ENCODE measurements at regions of chr6 and their contacts with region 1.

Region 1: GRCh38 chr6:168370310-168370991 is 50.9 kb upstream of the DACT2 start:
- DNase-seq: peak; percentile 91
- H3K4me3 ChIP-seq: no peak overlapping the region; a peak in 1 of 4 replicates
- H3K27ac ChIP-seq: no peak overlapping the region
- H3K4me1 ChIP-seq: peaks cover 0 to 4% of the 10 kb centered on the region in 2 experiments; a peak in 1 of 4 replicates
- H3K27me3 ChIP-seq: no peaks in the 10 kb centered on the region
- CTCF ChIP-seq: no peak
- EP300 ChIP-seq: no peak
- RAD21 ChIP-seq: peak; percentile 82

Region 2: DNA sequence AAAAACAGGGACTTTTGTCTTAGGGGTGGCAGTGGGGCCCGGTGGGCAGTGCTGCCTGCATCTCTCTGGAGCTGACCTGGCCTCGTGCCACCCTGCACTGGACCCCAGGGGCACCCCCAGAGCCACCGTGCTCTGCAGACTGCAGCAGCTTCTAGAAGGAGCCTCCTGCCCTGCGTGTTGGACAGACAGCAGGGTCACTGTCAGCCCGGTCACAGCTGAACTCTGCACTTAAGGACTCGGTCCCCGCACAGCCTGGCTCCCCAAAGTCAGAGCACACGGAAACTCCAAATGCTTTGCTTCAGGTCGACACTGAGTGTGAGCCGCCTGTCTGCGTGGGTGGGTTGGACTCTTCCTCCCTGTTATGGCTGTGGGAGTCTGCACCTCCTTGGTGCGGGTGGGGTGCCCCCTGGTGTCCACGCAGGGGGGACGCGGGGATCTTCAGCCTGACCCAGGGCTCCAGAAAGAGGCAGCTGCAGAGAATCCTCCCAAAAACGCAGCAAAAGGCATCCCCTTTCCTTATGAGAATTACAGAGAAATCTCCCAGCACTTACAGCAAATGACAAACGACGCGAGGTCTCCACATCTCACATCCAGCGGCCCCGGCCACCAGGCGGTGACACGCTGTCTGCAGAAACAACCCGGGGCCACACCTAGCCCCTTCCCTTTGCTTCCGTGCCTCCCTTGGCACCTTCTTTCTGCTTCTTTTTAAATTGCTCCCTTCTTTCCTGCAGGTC is 14.6 kb before region 1 on chr6:
- CTCF ChIA-PET with region 1: interaction called, 11 read pairs
- POLR2A ChIA-PET with region 1: no interaction called
- DNase-seq: peak; percentile 92
- H3K4me3 ChIP-seq: peak overlapping the region in 1 of 2 experiments; percentile 37; a peak in 1 of 4 replicates
- H3K27ac ChIP-seq: no peak overlapping the region
- H3K4me1 ChIP-seq: peaks cover 0 to 3% of the 10 kb centered on the region in 2 experiments; a peak in 1 of 4 replicates
- H3K27me3 ChIP-seq: no peaks in the 10 kb centered on the region
- CTCF ChIP-seq: no peak
- EP300 ChIP-seq: no peak
- RAD21 ChIP-seq: peak; percentile 82

Region 3: DNA sequence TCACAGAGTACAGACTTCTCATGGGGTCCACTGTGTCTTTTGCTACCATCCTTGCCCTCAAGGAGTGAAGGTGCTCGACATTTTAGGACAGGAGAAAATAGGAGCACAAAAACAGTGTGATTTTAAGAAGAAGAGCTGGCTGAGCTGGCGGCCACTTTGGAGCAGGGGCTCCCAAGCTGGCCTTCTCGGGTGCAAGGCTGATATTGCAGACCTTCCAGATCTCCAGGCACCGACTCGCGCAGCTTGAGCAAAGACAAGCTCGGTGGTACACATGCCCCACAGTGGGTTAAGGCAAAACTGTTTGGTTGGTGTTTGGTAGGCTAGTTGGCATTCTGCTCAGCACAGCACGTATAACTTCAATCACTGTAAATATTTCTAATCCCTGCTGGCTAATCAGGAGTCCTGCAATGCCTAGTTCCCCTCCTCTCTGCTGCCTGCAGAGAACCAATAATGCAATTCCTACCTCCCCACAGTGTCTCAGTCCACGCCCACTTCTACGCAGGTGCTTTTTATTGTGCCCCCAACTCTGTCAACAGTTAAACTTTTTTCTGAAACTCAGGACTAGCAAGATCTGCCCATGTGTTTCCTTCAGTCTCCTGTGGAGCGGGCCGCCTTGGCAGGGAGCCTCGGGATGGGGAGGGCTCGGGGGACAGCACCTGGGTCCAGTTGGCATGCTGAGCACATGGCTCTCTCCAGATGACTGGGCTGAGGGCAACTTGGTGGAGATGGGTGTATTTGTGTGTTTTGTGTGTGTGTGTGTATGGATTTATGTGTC is 57.8 kb after region 1 on chr6:
- CTCF ChIA-PET with region 1: no interaction called
- POLR2A ChIA-PET with region 1: no interaction called
- DNase-seq: no peak
- H3K4me3 ChIP-seq: no peak overlapping the region
- H3K27ac ChIP-seq: no peak overlapping the region
- H3K4me1 ChIP-seq: peaks cover 0 to 7% of the 10 kb centered on the region in 2 experiments; a peak in 1 of 4 replicates
- H3K27me3 ChIP-seq: no peaks in the 10 kb centered on the region
- CTCF ChIP-seq: no peak
- EP300 ChIP-seq: no peak
- RAD21 ChIP-seq: no peak

Region 4: DNA sequence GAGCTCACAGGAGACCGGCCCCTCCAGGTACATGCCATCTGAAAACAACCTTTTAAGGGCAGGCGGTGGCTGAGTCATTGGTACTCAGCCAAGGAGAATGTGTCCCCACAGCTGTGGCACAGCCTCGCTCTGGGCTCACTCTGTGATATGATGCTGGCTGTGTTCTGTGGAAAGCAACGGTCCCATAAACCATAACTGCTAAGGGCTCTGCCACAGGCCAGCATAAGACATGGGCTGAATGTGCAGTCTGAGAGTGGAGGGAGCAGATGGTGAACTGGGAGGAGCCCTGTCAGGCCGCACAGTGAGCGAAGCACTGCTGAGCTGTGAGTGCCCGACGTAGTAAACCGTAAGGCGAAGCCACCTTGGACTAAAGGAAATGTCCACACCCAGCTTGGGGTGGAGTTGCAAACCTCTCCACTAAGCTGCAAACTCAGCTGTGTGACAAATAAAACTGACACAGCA is 507.4 kb after region 1 on chr6:
- CTCF ChIA-PET with region 1: interaction called, 44 read pairs
- POLR2A ChIA-PET with region 1: no interaction called
- DNase-seq: no peak
- H3K4me3 ChIP-seq: no peak overlapping the region
- H3K27ac ChIP-seq: no peak overlapping the region
- H3K4me1 ChIP-seq: peaks cover 0 to 9% of the 10 kb centered on the region in 2 experiments; a peak in 1 of 4 replicates
- H3K27me3 ChIP-seq: no peaks in the 10 kb centered on the region
- CTCF ChIP-seq: no peak
- EP300 ChIP-seq: no peak
- RAD21 ChIP-seq: no peak

Region 5: GRCh38 chr6:168895102-168895812 is 524.8 kb after region 1 on chr6:
- CTCF ChIA-PET with region 1: interaction called, 30 read pairs
- POLR2A ChIA-PET with region 1: no interaction called
- DNase-seq: peak; percentile 88
- H3K4me3 ChIP-seq: peak overlapping the region in 1 of 2 experiments; percentile 24; a peak in 1 of 4 replicates
- H3K27ac ChIP-seq: no peak overlapping the region
- H3K4me1 ChIP-seq: peaks cover 0 to 3% of the 10 kb centered on the region in 2 experiments; a peak in 1 of 4 replicates
- H3K27me3 ChIP-seq: no peaks in the 10 kb centered on the region
- CTCF ChIP-seq: peak; percentile 88
- EP300 ChIP-seq: no peak
- RAD21 ChIP-seq: peak; percentile 89